ENCODE measurements at regions of chr10 and their contacts with region 1.

Region 1: DNA sequence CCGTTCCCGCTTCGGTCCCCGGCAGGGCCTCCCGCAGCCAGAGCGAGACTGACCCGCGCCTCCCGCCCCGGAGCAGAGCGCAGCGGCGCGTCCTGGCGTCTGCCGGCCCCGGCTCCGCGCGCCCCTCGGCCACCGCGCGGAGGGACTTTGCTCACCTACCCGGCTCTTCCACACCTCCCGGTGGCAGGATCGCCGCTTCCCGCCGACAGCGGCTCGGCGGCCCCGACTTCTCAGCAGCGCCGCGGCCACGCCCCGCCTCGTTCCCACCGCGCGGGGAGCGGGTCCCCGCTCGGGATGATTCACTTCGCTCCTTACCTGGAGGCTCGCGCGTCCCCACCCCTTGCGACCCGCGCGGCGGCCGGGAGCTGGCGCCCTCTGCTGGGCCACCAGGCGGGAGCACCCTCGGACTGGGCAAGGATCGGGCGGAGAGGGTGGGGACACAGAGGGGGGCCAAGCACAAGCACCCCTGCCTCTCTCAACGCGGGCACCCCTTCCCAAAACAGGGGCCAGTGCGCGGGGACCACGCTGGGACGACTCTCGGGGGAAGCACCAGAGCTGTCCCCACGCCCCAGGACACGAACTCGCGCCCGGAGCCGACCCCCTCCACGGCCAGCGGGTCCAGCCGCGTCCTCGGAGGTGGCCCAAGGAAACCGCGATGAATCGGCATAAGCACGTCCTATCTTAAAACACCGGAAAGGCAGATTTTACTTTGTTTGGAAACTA is 101.0 kb upstream of the SVIL start:
- DNase-seq: peak; percentile 93 to 99
- H3K4me3 ChIP-seq: peak overlapping the region; percentile 75
- H3K4me3 Mint-ChIP-seq: peak overlapping the region; percentile 91
- H3K27ac Mint-ChIP-seq: peak overlapping the region; percentile 62
- H3K4me1 ChIP-seq: peaks cover 30% of the 10 kb centered on the region
- H3K4me1 Mint-ChIP-seq: peaks cover 21% of the 10 kb centered on the region
- H3K27me3 ChIP-seq: no peaks in the 10 kb centered on the region
- H3K27me3 Mint-ChIP-seq: no peaks in the 10 kb centered on the region
- CTCF ChIP-seq: peak; percentile 98 to 99

Region 2: GRCh38 chr10:29535012-29535777 is 200.6 kb before region 1 on chr10:
- CTCF ChIA-PET with region 1: no interaction called
- POLR2A ChIA-PET with region 1: no interaction called
- intact Hi-C with region 1: loop called (anchors 2 kb)
- DNase-seq: peak; percentile 92 to 95
- H3K4me3 ChIP-seq: no peak overlapping the region
- H3K4me3 Mint-ChIP-seq: peak overlapping the region; percentile 64
- H3K27ac Mint-ChIP-seq: peak overlapping the region; percentile 80
- H3K4me1 ChIP-seq: peaks cover 38% of the 10 kb centered on the region
- H3K4me1 Mint-ChIP-seq: peaks cover 24% of the 10 kb centered on the region
- H3K27me3 ChIP-seq: no peaks in the 10 kb centered on the region
- H3K27me3 Mint-ChIP-seq: no peaks in the 10 kb centered on the region
- CTCF ChIP-seq: peak; percentile 85 to 95

Region 3: GRCh38 chr10:29576681-29577080 is 159.1 kb before region 1 on chr10:
- CTCF ChIA-PET with region 1: no interaction called
- POLR2A ChIA-PET with region 1: no interaction called
- intact Hi-C with region 1: no loop called
- DNase-seq: no peak
- H3K4me3 ChIP-seq: no peak overlapping the region
- H3K4me3 Mint-ChIP-seq: no peak overlapping the region
- H3K27ac Mint-ChIP-seq: no peak overlapping the region
- H3K4me1 ChIP-seq: no peaks in the 10 kb centered on the region
- H3K4me1 Mint-ChIP-seq: peaks cover 6% of the 10 kb centered on the region
- H3K27me3 ChIP-seq: no peaks in the 10 kb centered on the region
- H3K27me3 Mint-ChIP-seq: no peaks in the 10 kb centered on the region
- CTCF ChIP-seq: no peak

Region 4: DNA sequence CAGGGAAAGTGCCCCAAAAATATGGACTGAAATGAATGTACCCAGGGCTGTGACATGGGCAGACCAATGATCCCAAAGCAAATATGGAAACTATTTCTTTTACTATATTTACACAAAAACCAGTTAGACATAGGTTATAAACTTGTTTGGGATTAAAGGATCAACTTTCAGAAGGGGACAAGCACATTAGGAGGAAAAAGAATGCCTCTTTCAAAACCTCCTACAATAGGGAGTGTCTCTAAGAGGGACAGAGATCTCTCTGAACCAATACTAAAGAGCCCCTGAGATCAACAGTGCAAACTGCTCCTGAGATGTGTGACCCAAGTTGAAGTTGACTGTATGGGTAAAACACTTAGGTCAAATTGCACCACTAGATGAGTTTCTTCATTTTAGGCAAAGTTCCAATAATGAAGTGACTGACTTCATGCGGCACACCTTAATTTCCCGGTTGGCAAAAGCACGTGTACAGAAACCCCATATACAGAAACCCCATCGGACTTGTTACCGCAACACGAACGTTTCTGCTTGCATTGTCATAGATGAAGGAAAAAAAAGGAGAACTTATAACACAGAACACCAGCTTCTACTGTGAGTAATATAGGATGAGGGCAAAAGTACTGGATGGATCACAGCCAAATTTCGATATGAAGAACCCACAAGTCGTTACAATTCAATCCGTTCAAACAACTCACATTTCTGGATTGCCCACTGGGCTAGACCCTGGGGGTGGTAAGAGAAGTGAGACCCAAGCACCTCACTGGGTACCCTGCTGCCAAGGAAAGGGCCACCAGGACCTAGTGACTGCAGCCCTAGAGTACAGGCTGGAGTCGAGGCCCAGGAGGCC is 105.3 kb before region 1 on chr10:
- CTCF ChIA-PET with region 1: interaction called, 4 read pairs
- POLR2A ChIA-PET with region 1: interaction called, 3 read pairs
- intact Hi-C with region 1: loop called (anchors 1 kb)
- DNase-seq: peak in 1 of 2 experiments; percentile 79
- H3K4me3 ChIP-seq: no peak overlapping the region
- H3K4me3 Mint-ChIP-seq: peak overlapping the region; percentile 64
- H3K27ac Mint-ChIP-seq: peak overlapping the region; percentile 69
- H3K4me1 ChIP-seq: peaks cover 60% of the 10 kb centered on the region
- H3K4me1 Mint-ChIP-seq: peaks cover 60% of the 10 kb centered on the region
- H3K27me3 ChIP-seq: no peaks in the 10 kb centered on the region
- H3K27me3 Mint-ChIP-seq: no peaks in the 10 kb centered on the region
- CTCF ChIP-seq: no peak

Region 5: GRCh38 chr10:29725133-29725720 is 10.5 kb before region 1 on chr10:
- CTCF ChIA-PET with region 1: no interaction called
- POLR2A ChIA-PET with region 1: no interaction called
- intact Hi-C with region 1: loop called (anchors 1 kb)
- DNase-seq: peak; percentile 63 to 83
- H3K4me3 ChIP-seq: no peak overlapping the region
- H3K4me3 Mint-ChIP-seq: peak overlapping the region; percentile 25
- H3K27ac Mint-ChIP-seq: peak overlapping the region; percentile 72
- H3K4me1 ChIP-seq: peaks cover 41% of the 10 kb centered on the region
- H3K4me1 Mint-ChIP-seq: peaks cover 24% of the 10 kb centered on the region
- H3K27me3 ChIP-seq: no peaks in the 10 kb centered on the region
- H3K27me3 Mint-ChIP-seq: no peaks in the 10 kb centered on the region
- CTCF ChIP-seq: no peak

Region 6: GRCh38 chr10:29857843-29858701 is 122.3 kb after region 1 on chr10:
- CTCF ChIA-PET with region 1: interaction called, 4 read pairs
- POLR2A ChIA-PET with region 1: no interaction called
- intact Hi-C with region 1: loop called (anchors 1 kb)
- DNase-seq: peak; percentile 81 to 85
- H3K4me3 ChIP-seq: no peak overlapping the region
- H3K4me3 Mint-ChIP-seq: peak overlapping the region; percentile 18
- H3K27ac Mint-ChIP-seq: peak overlapping the region; percentile 28
- H3K4me1 ChIP-seq: peaks cover 72% of the 10 kb centered on the region
- H3K4me1 Mint-ChIP-seq: peaks cover 44% of the 10 kb centered on the region
- H3K27me3 ChIP-seq: no peaks in the 10 kb centered on the region
- H3K27me3 Mint-ChIP-seq: no peaks in the 10 kb centered on the region
- CTCF ChIP-seq: peak; percentile 83 to 95